GM12878 (cell line): ENCODE measurements at regions of chr12 and their contacts with region 1.

Region 1: GRCh38 chr12:102879144-102879763 is 37.8 kb downstream of the PAH start:
- DNase-seq: peak; percentile 51
- ATAC-seq: peak; percentile 88
- H3K4me3 ChIP-seq: no peak overlapping the region
- H3K27ac ChIP-seq: no peak overlapping the region
- H3K4me1 ChIP-seq: no peaks in the 10 kb centered on the region; the same call in 1 of the 2 replicates
- H3K27me3 ChIP-seq: no peaks in the 10 kb centered on the region
- CTCF ChIP-seq: peak; percentile 47 to 79 (median 73); a peak in 5 of 6 replicates
- EP300 ChIP-seq: no peak
- POLR2A ChIP-seq: no peak
- RAD21 ChIP-seq: peak; percentile 71

Region 2: DNA sequence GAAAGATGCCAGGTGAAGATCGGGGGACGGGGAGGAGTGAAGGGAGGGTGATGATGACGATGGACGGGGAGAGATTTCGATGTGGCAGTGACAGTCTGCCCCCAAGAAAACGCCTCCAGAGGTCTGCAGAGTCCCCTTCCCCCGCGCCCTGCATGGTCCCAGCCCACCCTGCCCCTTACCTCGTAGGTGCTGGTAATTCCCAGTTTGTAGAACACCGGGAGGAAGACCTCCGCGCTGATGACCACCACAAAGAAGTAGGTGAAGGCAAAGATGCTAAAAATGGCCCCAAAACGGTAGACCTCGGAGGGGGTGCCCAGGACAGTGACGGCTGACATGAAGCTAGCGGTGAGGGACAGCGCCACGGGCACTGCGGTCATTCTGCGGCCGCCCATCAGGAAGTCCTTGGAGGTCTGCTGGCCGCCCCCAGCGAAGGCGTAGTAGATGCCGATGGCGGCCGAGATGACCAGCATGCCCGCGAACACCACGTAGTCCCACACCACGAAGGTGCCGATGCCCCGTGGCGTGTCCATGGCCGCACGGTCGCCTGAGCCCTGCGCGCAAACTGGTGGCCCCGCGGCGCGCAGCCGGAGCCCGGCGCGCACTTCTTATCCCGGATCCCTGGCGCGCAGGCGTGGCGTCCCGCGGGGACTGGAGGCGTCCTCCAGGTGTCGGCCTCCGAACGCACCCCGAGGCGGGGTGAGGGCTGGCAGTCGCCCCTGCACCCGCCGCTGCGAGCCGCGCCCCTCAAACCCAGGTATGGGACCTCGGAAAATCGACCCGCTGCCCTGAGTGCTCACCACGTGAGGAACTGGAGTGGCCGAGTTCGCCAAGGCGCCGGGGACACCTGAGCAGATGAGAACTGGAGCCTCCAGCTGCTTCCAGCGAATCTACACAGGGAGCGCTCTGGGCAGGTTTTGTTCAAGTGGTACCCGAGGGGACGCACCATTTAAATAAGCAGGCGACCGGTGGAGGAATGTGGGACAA is 1669.6 kb before region 1 on chr12 and contains the start of gene SLC5A8:
- CTCF ChIA-PET with region 1: no interaction called
- POLR2A ChIA-PET with region 1: no interaction called
- RAD21 ChIA-PET with region 1: no interaction called
- SMC1A ChIA-PET with region 1: no interaction called
- in situ Hi-C with region 1: no loop called
- intact Hi-C with region 1: no loop called
- DNase-seq: no peak
- ATAC-seq: no peak
- H3K4me3 ChIP-seq: no peak within 1 kb of the TSS
- H3K27ac ChIP-seq: no peak within 1 kb of the TSS
- H3K4me1 ChIP-seq: no peaks in the 10 kb centered on the region
- H3K27me3 ChIP-seq: no peaks in the 10 kb centered on the region; a peak in 2 of 4 replicates
- CTCF ChIP-seq: no peak
- EP300 ChIP-seq: no peak
- POLR2A ChIP-seq: no peak
- RAD21 ChIP-seq: no peak
- polyA plus RNA-seq, gene SLC5A8: not detected

Region 3: GRCh38 chr12:102793921-102794320 is 85.3 kb before region 1 on chr12:
- CTCF ChIA-PET with region 1: no interaction called
- POLR2A ChIA-PET with region 1: no interaction called
- RAD21 ChIA-PET with region 1: no interaction called
- SMC1A ChIA-PET with region 1: no interaction called
- in situ Hi-C with region 1: no loop called
- intact Hi-C with region 1: no loop called
- DNase-seq: no peak
- ATAC-seq: no peak
- H3K4me3 ChIP-seq: no peak overlapping the region
- H3K27ac ChIP-seq: no peak overlapping the region
- H3K4me1 ChIP-seq: no peaks in the 10 kb centered on the region
- H3K27me3 ChIP-seq: peaks cover 0 to under 1% of the 10 kb centered on the region in 2 experiments; a peak in 3 of 4 replicates
- CTCF ChIP-seq: no peak
- EP300 ChIP-seq: no peak
- POLR2A ChIP-seq: no peak
- RAD21 ChIP-seq: no peak

Region 4: GRCh38 chr12:102917026-102917787 is 38.0 kb after region 1 on chr12 and contains the start of gene PAH:
- CTCF ChIA-PET with region 1: interaction called, 19 read pairs
- POLR2A ChIA-PET with region 1: no interaction called
- RAD21 ChIA-PET with region 1: interaction called, 9 read pairs
- SMC1A ChIA-PET with region 1: interaction called, 7 read pairs
- in situ Hi-C with region 1: no loop called
- intact Hi-C with region 1: no loop called
- DNase-seq: no peak
- ATAC-seq: peak; percentile 85
- H3K4me3 ChIP-seq: peak within 1 kb of the TSS; percentile 40
- H3K27ac ChIP-seq: no peak within 1 kb of the TSS
- H3K4me1 ChIP-seq: peaks cover 14% of the 10 kb centered on the region
- H3K27me3 ChIP-seq: no peaks in the 10 kb centered on the region
- CTCF ChIP-seq: peak; percentile 14 to 27 (median 20); a peak in 3 of 6 replicates
- EP300 ChIP-seq: no peak
- POLR2A ChIP-seq: no peak
- RAD21 ChIP-seq: peak; percentile 18; the same call in 1 of the 2 replicates
- polyA plus RNA-seq, gene PAH: 0.20 to 0.31 TPM

Region 5: DNA sequence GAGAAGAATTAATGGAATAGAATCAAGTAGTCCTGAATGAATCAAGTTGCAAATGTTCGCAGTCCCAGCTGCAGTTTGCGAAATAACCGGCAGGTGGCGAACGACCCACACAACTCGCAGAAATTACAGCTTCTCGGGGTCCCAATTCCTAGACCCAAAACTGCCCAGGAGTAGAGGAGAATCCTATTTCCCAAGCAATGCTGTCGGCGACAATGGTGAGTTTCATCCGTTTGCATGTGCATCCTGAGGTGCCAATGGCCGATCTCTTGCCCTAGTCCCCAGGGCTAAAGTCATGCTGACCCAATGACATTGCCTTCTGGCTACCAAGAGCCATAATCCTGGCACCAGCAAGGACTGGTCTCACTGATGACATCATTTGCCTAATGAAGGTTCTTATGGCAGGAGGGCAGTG is 69.7 kb after region 1 on chr12:
- CTCF ChIA-PET with region 1: interaction called, 281 read pairs
- POLR2A ChIA-PET with region 1: interaction called, 3 read pairs
- RAD21 ChIA-PET with region 1: interaction called, 54 read pairs
- SMC1A ChIA-PET with region 1: interaction called, 44 read pairs
- in situ Hi-C with region 1: no loop called
- intact Hi-C with region 1: no loop called
- DNase-seq: no peak
- ATAC-seq: peak; percentile 32
- H3K4me3 ChIP-seq: no peak overlapping the region
- H3K27ac ChIP-seq: no peak overlapping the region
- H3K4me1 ChIP-seq: peaks cover 8% of the 10 kb centered on the region
- H3K27me3 ChIP-seq: no peaks in the 10 kb centered on the region; a peak in 1 of 4 replicates
- CTCF ChIP-seq: peak; percentile 88 to 94 (median 90)
- EP300 ChIP-seq: no peak
- POLR2A ChIP-seq: no peak
- RAD21 ChIP-seq: peak; percentile 88

Region 6: GRCh38 chr12:103114296-103115055 is 235.2 kb after region 1 on chr12:
- CTCF ChIA-PET with region 1: no interaction called
- POLR2A ChIA-PET with region 1: no interaction called
- RAD21 ChIA-PET with region 1: interaction called, 6 read pairs
- SMC1A ChIA-PET with region 1: interaction called, 3 read pairs
- in situ Hi-C with region 1: no loop called
- intact Hi-C with region 1: loop called (anchors 10 kb)
- DNase-seq: peak; percentile 95
- ATAC-seq: peak; percentile 98
- H3K4me3 ChIP-seq: no peak overlapping the region
- H3K27ac ChIP-seq: peak overlapping the region; percentile 80
- H3K4me1 ChIP-seq: peaks cover 19% of the 10 kb centered on the region
- H3K27me3 ChIP-seq: no peaks in the 10 kb centered on the region
- CTCF ChIP-seq: no peak
- EP300 ChIP-seq: peak; percentile 73 to 94; a peak in 3 of 4 replicates
- POLR2A ChIP-seq: no peak
- RAD21 ChIP-seq: peak; percentile 47

Region 7: DNA sequence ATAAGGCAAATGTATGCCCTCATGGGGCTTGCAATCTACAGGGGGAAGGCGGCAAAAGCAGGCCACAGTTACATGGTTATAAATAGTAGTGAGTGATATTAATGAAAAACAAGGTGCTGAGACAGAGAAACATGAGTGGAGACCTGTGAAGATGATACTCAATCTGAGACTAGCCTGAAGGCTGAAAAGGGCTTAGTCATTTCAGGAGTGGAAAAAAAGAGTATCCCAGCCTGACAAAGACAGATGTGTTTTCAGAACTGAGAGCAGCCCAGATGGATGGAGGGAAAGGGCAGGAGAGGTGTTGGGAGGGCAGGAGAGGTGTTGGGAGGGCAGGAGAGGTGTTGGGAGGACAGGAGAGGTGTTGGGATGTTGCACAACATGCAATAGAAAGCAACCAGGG is 434.6 kb after region 1 on chr12:
- CTCF ChIA-PET with region 1: interaction called, 7 read pairs
- POLR2A ChIA-PET with region 1: no interaction called
- RAD21 ChIA-PET with region 1: interaction called, 4 read pairs
- SMC1A ChIA-PET with region 1: interaction called, 10 read pairs
- in situ Hi-C with region 1: no loop called
- intact Hi-C with region 1: no loop called
- DNase-seq: peak; percentile 26
- ATAC-seq: peak; percentile 76
- H3K4me3 ChIP-seq: no peak overlapping the region
- H3K27ac ChIP-seq: no peak overlapping the region
- H3K4me1 ChIP-seq: 0 out of 2 replicates have a peak, but pooled peaks cover 5% of the 10 kb centered on the region
- H3K27me3 ChIP-seq: no peaks in the 10 kb centered on the region
- CTCF ChIP-seq: no peak
- EP300 ChIP-seq: peak in 1 of 2 experiments; percentile 45; a peak in 2 of 4 replicates
- POLR2A ChIP-seq: no peak
- RAD21 ChIP-seq: no peak

Region 8: GRCh38 chr12:103538397-103538796 is 659.1 kb after region 1 on chr12:
- CTCF ChIA-PET with region 1: interaction called, 14 read pairs
- POLR2A ChIA-PET with region 1: no interaction called
- RAD21 ChIA-PET with region 1: interaction called, 4 read pairs
- SMC1A ChIA-PET with region 1: interaction called, 11 read pairs
- in situ Hi-C with region 1: no loop called
- intact Hi-C with region 1: no loop called
- DNase-seq: no peak
- ATAC-seq: no peak
- H3K4me3 ChIP-seq: no peak overlapping the region
- H3K27ac ChIP-seq: no peak overlapping the region
- H3K4me1 ChIP-seq: no peaks in the 10 kb centered on the region
- H3K27me3 ChIP-seq: no peaks in the 10 kb centered on the region
- CTCF ChIP-seq: no peak
- EP300 ChIP-seq: no peak
- POLR2A ChIP-seq: no peak
- RAD21 ChIP-seq: no peak